ENCODE measurements at regions of chr2 and their contacts with region 1.

Region 1: DNA sequence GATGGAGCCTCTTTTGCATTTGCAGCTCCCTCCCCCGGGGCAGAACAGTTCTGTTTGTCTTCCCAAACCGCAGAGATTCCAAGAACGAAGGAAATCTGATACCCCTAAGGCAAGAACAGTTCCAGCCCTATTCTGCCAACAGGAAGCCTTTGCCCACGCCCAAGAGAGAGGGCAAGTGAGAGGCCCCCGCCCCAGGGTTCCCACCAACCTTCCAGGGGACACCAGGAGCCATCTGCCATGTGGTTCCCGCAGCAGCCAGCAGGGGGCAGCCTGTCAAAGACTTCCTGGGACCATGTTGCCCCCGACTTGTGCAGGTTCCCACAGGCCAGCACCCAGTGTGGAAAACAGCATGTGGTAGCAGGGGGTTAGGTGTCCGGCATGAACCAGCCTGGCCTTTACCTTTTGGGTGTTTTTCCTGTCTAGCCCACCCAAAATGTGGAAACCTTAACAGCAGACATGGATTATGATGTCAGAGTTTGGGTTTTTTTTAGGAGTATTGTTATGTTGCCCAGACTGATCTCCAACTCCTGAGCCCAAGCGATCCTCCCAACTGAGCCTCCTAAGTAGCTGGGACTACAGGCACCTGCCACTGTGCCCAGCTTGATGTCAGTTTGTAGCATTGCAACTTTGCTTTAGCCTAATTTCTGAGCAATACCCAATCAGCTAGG is 21.7 kb upstream of the EFHD1 start:
- DNase-seq: peak in 1 of 2 donors; percentile 92
- H3K4me3 ChIP-seq: no peak overlapping the region
- CTCF ChIP-seq: no peak
- POLR2A ChIP-seq: no peak

Region 2: DNA sequence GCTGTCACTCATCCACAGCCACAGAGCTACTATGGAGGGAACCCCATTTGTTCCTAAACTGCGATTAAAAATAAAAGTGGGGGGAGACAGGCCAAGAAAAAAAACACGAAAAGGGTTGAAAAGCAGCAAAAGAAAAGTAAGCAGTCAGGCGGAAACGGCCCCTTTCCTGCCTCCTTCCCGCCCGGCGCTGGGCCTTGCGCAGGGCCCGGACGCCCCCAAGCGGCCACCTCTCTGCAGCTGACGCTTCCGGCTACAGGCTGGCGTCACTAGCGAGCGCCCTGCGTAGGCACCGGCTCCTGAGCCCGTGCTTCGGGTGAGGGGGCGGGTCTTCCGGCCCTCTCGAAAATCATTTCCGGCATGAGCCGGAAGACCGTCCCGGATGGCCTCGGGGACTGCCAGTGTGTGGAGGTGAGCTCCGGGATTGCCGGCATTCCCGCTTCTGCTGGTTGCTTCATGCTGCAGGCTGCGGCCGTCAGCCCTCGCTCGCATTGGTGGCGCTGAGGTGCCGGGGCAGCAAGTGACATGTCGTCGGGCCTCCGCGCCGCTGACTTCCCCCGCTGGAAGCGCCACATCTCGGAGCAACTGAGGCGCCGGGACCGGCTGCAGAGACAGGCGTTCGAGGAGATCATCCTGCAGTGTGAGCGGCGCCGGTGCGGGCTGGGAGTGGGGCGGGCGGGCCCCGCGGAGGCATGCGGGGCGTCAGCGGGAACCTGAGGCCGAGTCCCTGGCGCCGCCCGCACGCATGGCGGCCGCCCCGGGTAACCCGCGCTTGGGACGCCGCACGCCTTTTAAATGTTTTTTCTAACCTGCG is 639.8 kb after region 1 on chr2 and contains the start of gene ATG16L1:
- intact Hi-C with region 1: loop called (anchors 10 kb)
- DNase-seq: peak; percentile 91 to 98
- H3K4me3 ChIP-seq: peak within 1 kb of the TSS; percentile 71
- CTCF ChIP-seq: peak in 1 of 3 donors; percentile 35
- POLR2A ChIP-seq: no peak
- total RNA-seq, gene ATG16L1: 38.9 to 56.9 (median 40.4) TPM

Region 3: DNA sequence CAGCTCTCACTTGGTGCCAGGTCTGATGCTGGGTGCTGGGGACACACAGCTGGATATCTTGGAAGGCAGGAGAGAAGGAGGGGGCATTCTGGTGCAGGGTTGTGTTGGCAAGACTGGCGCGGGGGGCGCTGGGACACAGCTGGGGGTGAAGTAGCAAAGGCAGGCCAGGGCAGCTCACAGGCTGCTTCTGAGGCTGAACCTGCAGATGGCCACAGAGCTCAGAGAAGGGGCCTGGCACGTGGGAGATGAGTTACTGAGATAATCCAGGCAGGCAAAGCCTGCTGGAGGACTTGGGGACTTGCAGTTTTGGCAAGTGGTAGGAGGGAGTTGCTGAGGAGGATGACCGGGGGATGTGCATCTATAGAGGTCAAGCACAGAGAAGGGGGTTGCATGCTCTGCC is 726.4 kb after region 1 on chr2:
- intact Hi-C with region 1: no loop called
- DNase-seq: no peak
- H3K4me3 ChIP-seq: no peak overlapping the region
- CTCF ChIP-seq: no peak
- POLR2A ChIP-seq: no peak

Measured in lower leg skin (tissue), 4 donors.